HEK293 (cell line): ENCODE measurements at regions of chr9 and their contacts with region 1.

Region 1: GRCh38 chr9:124794902-124795491 is 18.1 kb downstream of the OLFML2A start:
- H3K4me3 ChIP-seq: no peak overlapping the region
- H3K27ac ChIP-seq: no peak overlapping the region
- H3K4me1 ChIP-seq: no peaks in the 10 kb centered on the region
- CTCF ChIP-seq: peak; percentile 44; the same call in 1 of the 2 replicates

Region 2: GRCh38 chr9:124812401-124813016 is 17.5 kb after region 1 on chr9:
- CTCF ChIA-PET with region 1: interaction called, 10 read pairs
- POLR2A ChIA-PET with region 1: interaction called, 6 read pairs
- H3K4me3 ChIP-seq: no peak overlapping the region
- H3K27ac ChIP-seq: no peak overlapping the region; the same call in none of the 2 replicates
- H3K4me1 ChIP-seq: 0 out of 2 replicates have a peak, but pooled peaks cover 3% of the 10 kb centered on the region
- CTCF ChIP-seq: no peak